WTC11 (cell line): ENCODE measurements at regions of chr17 and their contacts with region 1.

Region 1: GRCh38 chr17:33459078-33459940 is 166.2 kb upstream of the ASIC2 start:
- DNase-seq: peak; percentile 31
- ATAC-seq: peak; percentile 84
- H3K4me3 Mint-ChIP-seq: no peak overlapping the region
- H3K27ac Mint-ChIP-seq: no peak overlapping the region
- H3K4me1 Mint-ChIP-seq: peaks cover 14% of the 10 kb centered on the region
- H3K27me3 Mint-ChIP-seq: peaks cover 35% of the 10 kb centered on the region
- CTCF ChIP-seq: no peak

Region 2: GRCh38 chr17:33506889-33507650 is 47.8 kb after region 1 on chr17:
- CTCF ChIA-PET with region 1: no interaction called
- POLR2A ChIA-PET with region 1: no interaction called
- DNase-seq: no peak
- ATAC-seq: no peak
- H3K4me3 Mint-ChIP-seq: no peak overlapping the region
- H3K27ac Mint-ChIP-seq: no peak overlapping the region
- H3K4me1 Mint-ChIP-seq: peaks cover 10% of the 10 kb centered on the region
- H3K27me3 Mint-ChIP-seq: peaks cover 5% of the 10 kb centered on the region
- CTCF ChIP-seq: no peak

Region 3: GRCh38 chr17:33520426-33521330 is 61.4 kb after region 1 on chr17:
- CTCF ChIA-PET with region 1: interaction called, 12 read pairs
- POLR2A ChIA-PET with region 1: no interaction called
- DNase-seq: peak; percentile 85
- ATAC-seq: peak; percentile 82
- H3K4me3 Mint-ChIP-seq: no peak overlapping the region
- H3K27ac Mint-ChIP-seq: no peak overlapping the region
- H3K4me1 Mint-ChIP-seq: peaks cover 2% of the 10 kb centered on the region; the same call in 1 of the 2 replicates
- H3K27me3 Mint-ChIP-seq: no peaks in the 10 kb centered on the region; the same call in 1 of the 2 replicates
- CTCF ChIP-seq: peak; percentile 70